Activated B cell treated with CpG ODN at 0.5 μM for 24 hours (primary cell): ENCODE measurements at regions of chr12 and their contacts with region 1.

Region 1: GRCh38 chr12:102769319-102769916 is 147.6 kb downstream of the PAH start:
- DNase-seq: no peak
- ATAC-seq: peak; percentile 71
- H3K4me3 Mint-ChIP-seq: no peak overlapping the region
- H3K27ac Mint-ChIP-seq: no peak overlapping the region
- H3K4me1 Mint-ChIP-seq: peaks cover 2% of the 10 kb centered on the region
- H3K27me3 Mint-ChIP-seq: peaks cover 10% of the 10 kb centered on the region
- CTCF ChIP-seq: no peak

Region 2: GRCh38 chr12:102095675-102096263 is 673.6 kb before region 1 on chr12:
- CTCF ChIA-PET with region 1: no interaction called
- POLR2A ChIA-PET with region 1: no interaction called
- intact Hi-C with region 1: loop called (anchors 1 kb)
- DNase-seq: no peak
- ATAC-seq: peak; percentile 49
- H3K4me3 Mint-ChIP-seq: no peak overlapping the region
- H3K27ac Mint-ChIP-seq: no peak overlapping the region
- H3K4me1 Mint-ChIP-seq: no peaks in the 10 kb centered on the region
- H3K27me3 Mint-ChIP-seq: no peaks in the 10 kb centered on the region
- CTCF ChIP-seq: no peak

Region 3: DNA sequence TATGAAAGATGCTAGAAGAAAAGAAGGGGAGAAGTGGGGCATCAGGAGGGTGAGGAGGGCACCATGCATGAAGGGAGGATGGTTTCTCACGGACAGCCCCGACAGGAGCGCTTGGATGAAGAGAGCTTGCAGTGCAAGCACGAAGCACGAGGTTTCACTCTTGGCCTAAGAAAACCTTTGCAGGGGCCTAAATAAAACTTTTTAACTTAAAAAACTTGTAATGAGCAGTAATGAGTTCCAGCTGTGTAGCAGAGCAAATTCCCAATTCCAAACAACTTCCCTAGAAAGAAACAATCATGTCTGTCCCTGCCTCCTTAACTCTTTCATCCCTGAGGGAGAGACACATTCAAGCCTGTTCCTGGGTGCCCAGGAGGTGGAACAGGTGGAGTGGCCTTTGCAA is 28.1 kb after region 1 on chr12:
- CTCF ChIA-PET with region 1: no interaction called
- POLR2A ChIA-PET with region 1: no interaction called
- intact Hi-C with region 1: no loop called
- DNase-seq: no peak
- ATAC-seq: no peak
- H3K4me3 Mint-ChIP-seq: no peak overlapping the region
- H3K27ac Mint-ChIP-seq: no peak overlapping the region
- H3K4me1 Mint-ChIP-seq: no peaks in the 10 kb centered on the region
- H3K27me3 Mint-ChIP-seq: no peaks in the 10 kb centered on the region
- CTCF ChIP-seq: no peak